ENCODE measurements at regions of chr1 and their contacts with region 1.

Region 1: GRCh38 chr1:71049951-71050598 is 2.5 kb upstream of the PTGER3 start:
- DNase-seq: no peak
- ATAC-seq: peak; percentile 67
- H3K4me3 Mint-ChIP-seq: no peak overlapping the region
- H3K27ac Mint-ChIP-seq: no peak overlapping the region
- H3K4me1 Mint-ChIP-seq: peaks cover 17% of the 10 kb centered on the region
- H3K27me3 Mint-ChIP-seq: peaks cover 33% of the 10 kb centered on the region
- CTCF ChIP-seq: peak; percentile 71

Region 2: DNA sequence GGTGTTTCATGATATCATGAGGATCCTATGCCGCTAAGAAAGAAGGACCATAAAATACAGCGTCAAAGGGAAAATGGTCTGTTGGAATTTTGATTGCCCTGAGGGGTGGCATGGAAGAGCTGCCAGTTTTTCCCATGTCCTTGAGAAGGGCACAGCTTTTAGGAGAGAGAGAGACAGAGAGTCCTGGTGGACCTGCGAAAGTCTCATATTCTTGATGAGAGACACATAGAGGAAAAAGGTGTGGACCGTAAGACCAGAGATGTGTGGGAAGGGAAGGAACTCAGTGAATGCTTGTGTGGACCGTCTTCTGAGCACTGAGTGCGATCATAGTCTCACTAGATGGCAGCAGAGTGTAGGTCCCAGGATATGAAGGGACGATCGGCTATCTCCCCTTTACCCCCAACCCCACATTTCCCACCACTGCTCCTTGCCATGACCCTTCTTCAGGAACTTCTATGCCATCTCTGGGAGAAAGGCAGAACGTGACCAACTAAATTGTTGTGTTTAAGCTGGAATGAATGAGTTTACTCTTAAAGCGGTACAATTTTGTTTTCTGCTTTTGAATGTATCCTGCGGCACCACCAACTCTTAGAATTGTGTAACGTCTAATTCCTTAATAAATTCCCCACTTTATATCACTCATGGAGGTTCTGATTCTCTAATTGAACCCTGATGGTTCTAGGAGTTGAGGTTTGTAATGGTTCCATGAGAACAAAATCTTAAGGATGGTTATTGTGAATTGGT is 521.3 kb before region 1 on chr1:
- CTCF ChIA-PET with region 1: interaction called, 9 read pairs
- POLR2A ChIA-PET with region 1: no interaction called
- intact Hi-C with region 1: loop called (anchors 5 kb)
- DNase-seq: peak; percentile 32
- ATAC-seq: peak; percentile 62
- H3K4me3 Mint-ChIP-seq: no peak overlapping the region
- H3K27ac Mint-ChIP-seq: no peak overlapping the region
- H3K4me1 Mint-ChIP-seq: peaks cover 3% of the 10 kb centered on the region
- H3K27me3 Mint-ChIP-seq: peaks cover 15% of the 10 kb centered on the region
- CTCF ChIP-seq: peak; percentile 52

Region 3: DNA sequence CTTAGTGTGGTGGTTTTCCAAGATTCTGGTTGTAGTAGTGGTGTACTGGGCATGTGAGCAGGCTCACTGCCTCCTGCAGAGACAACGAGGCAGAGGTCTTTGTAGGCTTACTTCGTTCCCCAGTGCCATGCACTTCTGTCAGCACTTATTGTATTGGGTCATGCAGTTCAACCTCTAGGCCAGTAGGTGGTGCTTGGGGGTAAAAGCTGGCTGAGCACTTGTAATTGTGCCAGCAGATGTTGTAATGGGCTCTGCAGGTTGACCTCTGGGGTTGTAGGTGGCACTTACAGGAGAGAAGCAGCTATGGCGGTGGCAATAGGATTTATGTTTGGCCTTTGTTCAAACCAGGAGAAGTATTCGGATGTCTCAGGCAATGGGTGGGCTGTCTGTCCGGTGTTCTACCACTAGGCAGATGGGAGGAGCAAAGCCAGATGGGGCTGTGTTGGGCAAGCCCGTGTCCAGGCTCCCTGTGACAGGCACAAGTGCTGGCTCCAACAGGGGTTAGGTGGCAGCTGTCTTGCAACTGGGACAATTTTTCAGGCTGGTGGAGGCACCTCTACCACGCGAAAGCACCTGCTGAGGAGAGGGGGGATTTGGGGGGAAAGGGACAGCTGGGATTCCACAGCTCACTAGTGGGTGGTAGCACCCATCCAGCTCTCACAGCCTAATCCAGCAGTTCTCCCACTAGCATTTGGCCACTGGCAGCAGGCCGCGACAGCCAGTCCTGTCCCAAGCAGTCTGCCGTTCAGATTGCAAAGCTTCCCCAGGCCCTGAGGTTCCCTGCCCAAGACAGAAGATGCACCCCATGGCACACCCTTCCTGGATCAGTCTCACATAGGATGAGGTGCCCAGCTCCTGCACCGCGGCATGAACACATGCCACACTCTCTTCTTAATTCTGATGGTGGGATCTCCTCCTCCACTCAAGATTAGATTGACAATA is 364.5 kb before region 1 on chr1:
- CTCF ChIA-PET with region 1: interaction called, 13 read pairs
- POLR2A ChIA-PET with region 1: no interaction called
- intact Hi-C with region 1: loop called (anchors 1 kb)
- DNase-seq: peak; percentile 61
- ATAC-seq: peak; percentile 97
- H3K4me3 Mint-ChIP-seq: no peak overlapping the region
- H3K27ac Mint-ChIP-seq: no peak overlapping the region
- H3K4me1 Mint-ChIP-seq: no peaks in the 10 kb centered on the region
- H3K27me3 Mint-ChIP-seq: peaks cover 10% of the 10 kb centered on the region
- CTCF ChIP-seq: peak; percentile 80

Region 4: DNA sequence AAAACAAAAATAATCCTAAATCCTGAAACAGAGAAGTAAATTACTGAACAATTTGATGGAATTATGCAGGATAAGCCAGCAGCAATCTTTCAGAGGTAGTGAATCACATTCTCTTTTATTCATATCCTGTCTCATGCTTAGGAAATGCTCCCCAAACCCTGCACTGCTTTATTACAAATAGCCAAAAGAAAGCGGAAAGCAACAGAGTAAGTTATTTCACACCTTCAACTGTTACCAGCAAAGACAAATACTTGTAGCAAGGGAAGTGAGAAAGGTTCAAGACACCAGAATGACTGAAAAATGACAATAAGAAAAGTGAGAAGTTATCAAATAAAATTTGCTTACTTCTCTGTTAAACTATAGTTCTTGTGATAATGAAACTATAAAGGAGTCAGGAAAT is 24.6 kb after region 1 on chr1:
- CTCF ChIA-PET with region 1: no interaction called
- POLR2A ChIA-PET with region 1: no interaction called
- intact Hi-C with region 1: no loop called
- DNase-seq: no peak
- ATAC-seq: no peak
- H3K4me3 Mint-ChIP-seq: no peak overlapping the region
- H3K27ac Mint-ChIP-seq: peak overlapping the region; percentile 47
- H3K4me1 Mint-ChIP-seq: peaks cover 43% of the 10 kb centered on the region
- H3K27me3 Mint-ChIP-seq: no peaks in the 10 kb centered on the region
- CTCF ChIP-seq: no peak